ENCODE measurements at regions of chr19 and their contacts with region 1.

Region 1: GRCh38 chr19:19732579-19733501 is at the start of gene ZNF14:
- DNase-seq: peak; percentile 92 to 93
- ATAC-seq: peak; percentile 99 to 100
- H3K4me3 ChIP-seq: peak within 1 kb of the TSS; percentile 95
- H3K27ac ChIP-seq: peak within 1 kb of the TSS; percentile 70 to 87
- H3K4me1 ChIP-seq: no peaks in the 10 kb centered on the region
- CTCF ChIP-seq: no peak
- EP300 ChIP-seq: no peak
- POLR2A ChIP-seq: peak; percentile 82
- RAD21 ChIP-seq: no peak
- polyA plus RNA-seq, gene ZNF14: 2.8 and 2.9 TPM in 2 replicates

Region 2: GRCh38 chr19:19668230-19669012 is 64.4 kb before region 1 on chr19 and contains the start of gene ZNF101:
- CTCF ChIA-PET with region 1: no interaction called
- POLR2A ChIA-PET with region 1: interaction called, 13 read pairs
- DNase-seq: peak; percentile 74 to 89
- ATAC-seq: peak; percentile 88 to 90
- H3K4me3 ChIP-seq: peak within 1 kb of the TSS; percentile 66
- H3K27ac ChIP-seq: peak within 1 kb of the TSS; percentile 74 to 94
- H3K4me1 ChIP-seq: peaks cover 4% of the 10 kb centered on the region; the same call in 1 of the 3 replicates
- CTCF ChIP-seq: no peak
- EP300 ChIP-seq: no peak
- POLR2A ChIP-seq: peak; percentile 37
- RAD21 ChIP-seq: no peak
- polyA plus RNA-seq, gene ZNF101: 5.8 and 7.4 TPM in 2 replicates

Region 3: DNA sequence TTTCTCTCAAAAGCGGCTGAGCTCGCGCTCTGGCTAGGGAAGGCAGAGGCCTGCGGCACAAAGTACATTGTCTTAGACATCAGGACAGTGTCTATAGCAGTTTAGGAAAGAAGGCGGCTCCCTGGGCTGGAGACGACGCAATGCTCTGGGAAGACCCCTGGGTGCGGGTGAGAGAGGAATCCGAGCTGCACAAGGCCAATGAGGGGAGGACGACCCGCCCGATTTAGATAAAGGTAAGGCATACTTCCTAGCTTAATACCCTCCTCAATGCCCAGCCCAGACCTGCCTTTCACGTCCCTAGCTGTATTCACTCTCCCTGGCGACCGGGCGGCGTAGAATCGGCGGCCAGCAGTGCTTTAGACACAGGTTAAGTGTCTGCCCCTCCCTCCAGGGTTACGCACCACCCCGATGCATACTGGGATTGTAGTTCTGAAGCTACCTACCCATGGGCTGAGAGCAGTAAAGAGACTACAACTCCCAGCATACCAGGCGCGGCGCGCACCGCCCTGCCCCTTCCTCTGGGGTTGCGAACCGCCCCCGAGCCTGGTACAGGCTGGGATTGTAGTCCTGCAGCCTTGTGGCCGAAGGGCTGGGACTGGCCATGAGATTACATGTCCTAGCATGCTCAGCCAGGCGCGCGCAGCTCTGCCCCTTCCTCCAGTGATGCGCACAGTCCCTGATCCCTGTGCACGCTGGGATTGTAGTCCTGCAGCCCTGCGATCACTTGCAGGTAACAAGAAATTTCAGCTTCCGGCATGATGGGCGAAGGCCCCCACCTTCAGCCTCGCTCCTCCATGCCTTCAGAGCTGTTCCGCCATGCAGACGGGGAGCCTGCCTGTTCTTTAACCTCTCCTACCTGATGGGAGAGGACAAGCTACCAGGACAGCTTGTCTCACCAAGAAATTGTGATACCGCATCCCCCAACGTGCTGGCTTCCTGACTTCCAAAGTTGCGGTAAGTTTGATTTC is 43.5 kb after region 1 on chr19:
- CTCF ChIA-PET with region 1: no interaction called
- POLR2A ChIA-PET with region 1: interaction called, 19 read pairs
- DNase-seq: peak; percentile 75 to 96
- ATAC-seq: peak; percentile 100
- H3K4me3 ChIP-seq: peak overlapping the region; percentile 74
- H3K27ac ChIP-seq: peak overlapping the region; percentile 81 to 88
- H3K4me1 ChIP-seq: 0 out of 3 replicates have a peak, but pooled peaks cover 3% of the 10 kb centered on the region
- CTCF ChIP-seq: no peak
- EP300 ChIP-seq: no peak
- POLR2A ChIP-seq: peak; percentile 59
- RAD21 ChIP-seq: no peak